HCT116 (cell line): ENCODE measurements at regions of chr17 and their contacts with region 1.

Region 1: GRCh38 chr17:42517516-42517915 is 18.5 kb upstream of the NAGLU start:
- DNase-seq: peak; percentile 56
- ATAC-seq: peak; percentile 75
- H3K4me3 ChIP-seq: no peak overlapping the region
- H3K27ac ChIP-seq: peak overlapping the region; percentile 93
- H3K4me1 ChIP-seq: peaks cover 39 to 52% of the 10 kb centered on the region in 2 experiments
- H3K27me3 ChIP-seq: no peaks in the 10 kb centered on the region
- CTCF ChIP-seq: peak; percentile 95 to 98 (median 97)
- POLR2A ChIP-seq: no peak
- RAD21 ChIP-seq: peak; percentile 91

Region 2: DNA sequence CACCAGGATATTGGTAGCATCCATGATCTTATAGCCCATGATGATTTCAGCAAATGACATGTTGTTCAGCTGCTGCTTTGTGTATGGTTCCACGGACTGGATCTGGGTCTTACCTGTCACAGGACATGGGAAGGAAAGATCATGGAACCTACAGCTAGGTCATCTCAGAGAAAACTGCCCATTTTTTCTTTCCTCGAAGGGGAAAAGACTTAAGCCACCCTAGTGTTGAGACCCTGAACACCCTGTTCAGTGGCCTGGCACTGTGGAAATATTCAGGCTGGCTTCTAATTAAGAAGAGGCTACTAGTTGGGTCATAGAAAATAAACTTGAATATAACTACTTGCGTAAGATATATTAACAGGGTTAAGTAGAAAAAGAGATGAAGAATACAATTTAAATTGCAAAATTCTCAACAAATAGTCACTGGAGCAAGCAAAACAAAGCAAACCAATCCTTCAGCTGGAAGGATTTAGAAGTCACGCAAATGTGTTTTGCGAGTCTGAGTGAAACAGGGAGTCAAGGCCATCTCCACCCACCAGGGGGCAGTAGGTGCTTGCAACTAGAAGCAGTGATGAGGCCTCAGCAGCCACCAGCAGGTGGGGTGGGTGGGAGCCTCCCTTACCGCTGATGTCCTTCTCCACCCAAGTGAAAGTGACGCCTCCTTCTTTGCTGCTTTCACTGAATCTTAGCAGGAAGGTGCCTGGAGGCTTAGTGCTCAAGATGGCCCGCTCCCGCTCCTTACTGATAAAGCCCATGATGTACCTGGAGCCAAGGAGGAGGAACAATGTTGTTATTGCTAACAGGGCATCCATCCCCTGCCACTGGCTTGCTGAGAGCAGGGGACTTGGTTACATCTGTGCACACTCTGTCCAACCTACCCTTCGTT is 194.9 kb before region 1 on chr17:
- CTCF ChIA-PET with region 1: interaction called, 5 read pairs
- POLR2A ChIA-PET with region 1: no interaction called
- RAD21 ChIA-PET with region 1: no interaction called
- intact Hi-C with region 1: loop called (anchors 2 kb)
- DNase-seq: peak; percentile 85
- ATAC-seq: peak; percentile 86
- H3K4me3 ChIP-seq: no peak overlapping the region
- H3K27ac ChIP-seq: no peak overlapping the region
- H3K4me1 ChIP-seq: peaks cover 18 to 38% of the 10 kb centered on the region in 2 experiments
- H3K27me3 ChIP-seq: no peaks in the 10 kb centered on the region
- CTCF ChIP-seq: peak; percentile 99 to 100 (median 100)
- POLR2A ChIP-seq: no peak
- RAD21 ChIP-seq: peak; percentile 99

Region 3: DNA sequence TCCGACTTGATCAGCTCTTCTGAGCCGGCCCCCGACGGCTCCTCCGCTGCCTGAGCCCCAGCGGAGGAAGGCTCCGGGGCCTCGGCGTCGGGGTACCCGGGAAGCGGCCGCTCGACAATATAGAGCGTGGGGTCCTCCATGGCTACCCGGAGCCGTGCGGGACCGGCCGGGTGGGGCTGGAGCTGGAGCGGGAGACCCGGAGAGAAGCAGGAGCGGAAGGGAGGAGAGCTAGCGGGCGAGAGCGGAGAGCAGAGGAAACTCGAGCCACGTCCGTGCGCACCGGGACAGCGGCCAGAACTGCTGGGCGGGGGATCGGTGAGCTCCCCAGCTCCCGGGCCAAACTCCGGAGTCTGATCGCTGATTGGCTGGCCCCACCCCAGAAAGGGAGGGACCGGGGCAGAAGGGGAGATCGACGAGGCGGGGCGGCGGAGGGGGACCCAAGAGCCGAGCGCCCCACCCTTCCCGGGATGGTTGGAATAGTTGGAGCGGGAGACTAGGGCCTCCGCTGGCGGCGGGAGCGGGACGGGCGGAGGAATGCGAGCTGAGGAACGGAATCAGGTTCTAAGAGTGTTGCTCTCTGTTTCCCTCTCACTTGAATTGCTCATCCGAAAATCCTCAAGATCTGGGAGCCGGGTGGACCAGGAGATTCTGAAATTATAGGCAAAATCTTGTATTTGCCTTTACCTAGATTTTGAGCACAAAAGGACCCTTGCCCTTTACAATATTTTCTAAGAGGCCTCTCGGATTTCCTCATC is 94.4 kb before region 1 on chr17 and contains the start of gene CAVIN1:
- CTCF ChIA-PET with region 1: interaction called, 9 read pairs
- POLR2A ChIA-PET with region 1: interaction called, 28 read pairs
- RAD21 ChIA-PET with region 1: no interaction called
- intact Hi-C with region 1: loop called (anchors 2 kb)
- DNase-seq: peak; percentile 85
- ATAC-seq: peak; percentile 79
- H3K4me3 ChIP-seq: peak within 1 kb of the TSS; percentile 90 to 94
- H3K27ac ChIP-seq: peak within 1 kb of the TSS; percentile 99
- H3K4me1 ChIP-seq: peaks cover 33 to 63% of the 10 kb centered on the region in 2 experiments
- H3K27me3 ChIP-seq: no peaks in the 10 kb centered on the region
- CTCF ChIP-seq: no peak
- POLR2A ChIP-seq: peak; percentile 97
- RAD21 ChIP-seq: no peak
- total RNA-seq, gene CAVIN1: 79.7 TPM